A549 (cell line): ENCODE measurements at regions of chr9 and their contacts with region 1.

Region 1: DNA sequence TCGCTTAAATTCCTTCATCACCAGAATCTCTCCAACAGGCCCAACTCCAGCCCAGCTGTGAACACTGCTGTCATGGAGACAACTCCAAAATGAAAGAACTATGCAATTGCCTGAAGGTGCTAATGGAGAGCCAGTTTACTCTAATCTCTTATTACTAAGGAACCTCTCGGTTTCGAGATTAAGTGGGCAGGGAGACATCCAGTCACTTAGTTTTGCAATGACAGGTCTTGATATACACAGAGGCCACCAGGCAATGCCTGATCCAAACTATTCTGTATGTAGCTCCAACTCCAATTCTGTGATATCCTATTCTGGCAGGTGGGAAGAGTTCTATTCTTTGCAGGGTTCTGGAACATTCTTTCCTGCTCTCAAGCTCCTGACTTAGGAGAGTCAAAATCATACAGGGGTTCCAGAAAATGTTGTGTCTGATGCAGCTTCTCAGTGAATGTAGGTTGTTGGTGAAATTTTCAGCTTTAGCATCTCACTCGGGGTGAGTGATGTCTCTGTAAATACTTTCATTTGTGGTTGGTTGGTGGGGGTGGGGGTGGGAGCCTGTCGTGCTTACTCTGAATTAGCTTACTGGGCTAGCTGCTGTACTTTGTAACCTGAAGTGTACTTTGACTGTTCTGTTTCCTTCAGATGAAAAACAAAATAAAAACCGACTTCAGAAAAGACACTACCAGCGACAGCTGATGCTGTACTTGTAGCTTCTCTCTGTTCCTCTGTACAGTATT is 170.9 kb downstream of the PALM2AKAP2 start:
- DNase-seq: no peak
- ATAC-seq: no peak
- H3K4me3 ChIP-seq: no peak overlapping the region
- H3K27ac ChIP-seq: no peak overlapping the region
- H3K4me1 ChIP-seq: no peaks in the 10 kb centered on the region
- CTCF ChIP-seq: no peak
- EP300 ChIP-seq: no peak
- POLR2A ChIP-seq: no peak
- RAD21 ChIP-seq: no peak

Region 2: DNA sequence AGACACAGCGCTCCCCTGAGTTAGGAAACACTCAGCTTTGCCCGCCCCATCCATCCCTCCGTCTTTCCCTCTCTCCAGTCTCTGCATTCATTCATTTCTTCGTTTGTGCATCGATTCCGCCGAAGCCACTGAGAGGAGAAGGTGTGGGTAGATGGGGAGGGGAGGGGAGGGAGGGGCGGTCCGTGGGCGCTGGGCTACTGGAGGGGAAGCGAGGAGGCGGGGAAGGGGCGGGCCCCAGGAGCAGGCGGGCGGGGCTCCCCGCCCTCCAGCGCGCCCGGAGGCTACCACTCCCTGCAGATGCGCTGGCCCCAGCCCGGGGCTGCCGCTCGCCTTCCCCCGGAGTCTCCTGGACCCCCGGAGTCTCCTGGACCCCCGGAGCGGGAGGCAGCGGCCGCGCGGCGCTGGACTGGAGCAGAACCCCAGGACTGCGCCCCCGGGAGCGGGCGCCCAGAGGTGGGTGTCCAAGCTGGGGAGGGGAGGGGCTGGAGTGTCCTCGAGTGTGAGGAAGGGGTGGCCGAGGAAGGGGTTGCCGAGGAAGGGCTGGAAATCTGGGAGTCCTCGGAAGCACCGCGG is 97.6 kb after region 1 on chr9:
- CTCF ChIA-PET with region 1: interaction called, 3 read pairs
- POLR2A ChIA-PET with region 1: interaction called, 10 read pairs
- DNase-seq: peak; percentile 47 to 55
- ATAC-seq: peak; percentile 86 to 90
- H3K4me3 ChIP-seq: peak overlapping the region; percentile 88
- H3K27ac ChIP-seq: peak overlapping the region; percentile 86 to 97
- H3K4me1 ChIP-seq: peaks cover 23% of the 10 kb centered on the region
- CTCF ChIP-seq: no peak
- EP300 ChIP-seq: no peak
- POLR2A ChIP-seq: peak; percentile 26; the same call in 1 of the 2 replicates
- RAD21 ChIP-seq: no peak